Endothelial cell of umbilical vein (primary cell): ENCODE measurements at regions of chr14 and their contacts with region 1.

Region 1: DNA sequence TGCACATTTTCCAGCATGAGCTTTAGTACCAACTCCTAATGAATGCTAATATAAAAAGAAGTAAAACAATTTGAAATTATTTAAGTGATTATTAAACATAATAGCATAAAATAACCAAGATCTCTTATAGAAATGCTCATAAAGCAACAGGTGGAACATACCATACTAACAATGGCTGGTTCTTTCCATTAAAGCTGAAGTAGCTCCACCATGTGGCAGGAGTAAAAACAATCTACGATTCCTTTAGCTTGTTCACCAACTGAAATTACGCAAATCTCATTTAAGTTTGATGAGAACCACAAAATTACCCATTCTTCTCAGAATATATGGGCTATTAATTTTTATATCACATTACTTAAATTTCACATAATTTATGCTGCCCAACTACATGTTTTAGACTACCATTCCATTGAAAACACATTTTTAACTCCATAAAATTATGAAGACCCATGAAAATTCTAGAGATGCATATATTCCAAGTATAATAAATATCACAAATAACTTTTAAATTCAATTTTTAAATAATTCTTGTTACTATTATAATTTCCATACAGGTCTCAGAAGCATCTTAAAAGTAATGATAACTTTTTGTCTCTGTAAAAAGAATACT is 213.6 kb downstream of the DAD1 start:
- DNase-seq: peak; percentile 62
- H3K4me3 ChIP-seq: no peak overlapping the region
- H3K27ac ChIP-seq: no peak overlapping the region
- H3K4me1 ChIP-seq: no peaks in the 10 kb centered on the region
- H3K27me3 ChIP-seq: peaks cover 28 to 52% of the 10 kb centered on the region in 2 experiments
- CTCF ChIP-seq: peak; percentile 35 to 47
- POLR2A ChIP-seq: no peak

Region 2: DNA sequence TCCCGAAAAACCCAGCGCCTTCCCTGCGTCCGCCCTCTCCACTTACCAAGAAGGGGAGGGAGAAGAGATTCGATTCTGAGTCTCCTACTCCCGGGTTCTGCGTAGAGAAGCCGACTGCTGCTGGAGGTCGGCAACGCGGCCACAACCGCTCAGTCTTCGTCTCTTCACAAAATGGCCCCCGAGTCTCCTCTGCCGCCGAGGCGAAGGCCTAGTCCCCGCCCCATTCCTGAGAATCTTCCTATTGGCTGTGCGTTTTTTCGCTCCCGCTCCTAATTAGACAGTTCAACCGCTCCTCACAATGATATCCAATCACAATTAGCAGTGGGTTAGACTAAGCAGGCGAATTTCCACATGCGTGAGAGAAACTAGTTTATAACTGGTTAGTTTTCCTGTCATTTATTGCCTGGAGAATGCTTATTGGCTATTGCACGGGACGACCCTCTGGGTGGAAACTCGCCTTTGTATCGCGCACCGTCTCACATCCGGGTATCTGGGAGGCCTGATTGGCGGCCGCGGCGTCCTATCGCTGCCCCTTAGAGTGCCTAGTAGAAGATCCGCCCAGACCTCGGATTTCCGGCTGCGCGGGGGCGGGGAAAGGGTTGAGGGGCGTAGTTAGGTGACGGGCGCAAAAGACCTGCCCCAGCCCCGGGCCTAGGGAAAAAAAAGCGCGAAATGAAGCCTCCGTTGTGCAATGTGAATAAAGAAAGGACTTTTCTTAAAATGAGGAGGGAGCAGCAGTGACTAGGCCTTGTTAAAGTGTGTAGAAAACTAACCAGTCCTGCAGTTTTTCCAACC is 1106.0 kb before region 1 on chr14 and contains the start of gene HNRNPC:
- CTCF ChIA-PET with region 1: no interaction called
- POLR2A ChIA-PET with region 1: no interaction called
- dilution Hi-C with region 1: no loop called
- intact Hi-C with region 1: no loop called
- DNase-seq: peak; percentile 100
- H3K4me3 ChIP-seq: peak within 1 kb of the TSS; percentile 78 to 99 (median 96)
- H3K27ac ChIP-seq: peak within 1 kb of the TSS; percentile 97
- H3K4me1 ChIP-seq: peaks cover 28% of the 10 kb centered on the region
- H3K27me3 ChIP-seq: no peaks in the 10 kb centered on the region
- CTCF ChIP-seq: no peak
- POLR2A ChIP-seq: peak; percentile 89
- total RNA-seq, gene HNRNPC: 611 and 674 TPM in 2 replicates

Region 3: DNA sequence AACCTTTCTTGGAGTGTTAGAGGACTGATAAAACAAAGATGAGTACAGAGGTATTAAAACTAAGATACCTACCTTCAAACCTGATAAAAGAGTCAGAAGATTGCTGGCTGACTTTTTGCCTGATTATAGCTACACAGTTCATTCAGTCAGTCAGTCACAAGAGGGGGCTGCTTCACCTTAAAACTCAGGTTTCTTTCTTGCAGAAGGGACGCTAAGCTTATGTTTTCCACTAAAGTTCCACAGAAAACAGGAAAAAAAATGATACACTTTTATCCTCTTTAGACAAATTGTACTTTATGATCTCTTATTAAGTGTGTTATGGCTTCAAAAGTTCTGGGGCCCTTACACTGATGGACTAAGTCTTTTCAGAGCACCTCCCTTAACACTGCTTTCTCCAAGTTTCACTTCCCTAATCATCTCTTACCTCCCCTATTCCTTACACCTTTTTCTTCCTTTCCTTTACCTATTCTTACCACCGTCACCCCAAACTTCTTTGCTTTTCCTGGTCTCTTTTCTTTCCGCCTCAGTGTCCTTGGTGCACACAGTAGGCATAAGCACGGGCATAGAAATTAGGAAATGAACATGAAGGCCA is 253.1 kb before region 1 on chr14:
- CTCF ChIA-PET with region 1: interaction called, 13 read pairs
- POLR2A ChIA-PET with region 1: no interaction called
- dilution Hi-C with region 1: no loop called
- intact Hi-C with region 1: no loop called
- DNase-seq: no peak
- H3K4me3 ChIP-seq: no peak overlapping the region
- H3K27ac ChIP-seq: no peak overlapping the region
- H3K4me1 ChIP-seq: no peaks in the 10 kb centered on the region
- H3K27me3 ChIP-seq: peaks cover 6 to 43% of the 10 kb centered on the region in 2 experiments
- CTCF ChIP-seq: no peak
- POLR2A ChIP-seq: no peak

Region 4: DNA sequence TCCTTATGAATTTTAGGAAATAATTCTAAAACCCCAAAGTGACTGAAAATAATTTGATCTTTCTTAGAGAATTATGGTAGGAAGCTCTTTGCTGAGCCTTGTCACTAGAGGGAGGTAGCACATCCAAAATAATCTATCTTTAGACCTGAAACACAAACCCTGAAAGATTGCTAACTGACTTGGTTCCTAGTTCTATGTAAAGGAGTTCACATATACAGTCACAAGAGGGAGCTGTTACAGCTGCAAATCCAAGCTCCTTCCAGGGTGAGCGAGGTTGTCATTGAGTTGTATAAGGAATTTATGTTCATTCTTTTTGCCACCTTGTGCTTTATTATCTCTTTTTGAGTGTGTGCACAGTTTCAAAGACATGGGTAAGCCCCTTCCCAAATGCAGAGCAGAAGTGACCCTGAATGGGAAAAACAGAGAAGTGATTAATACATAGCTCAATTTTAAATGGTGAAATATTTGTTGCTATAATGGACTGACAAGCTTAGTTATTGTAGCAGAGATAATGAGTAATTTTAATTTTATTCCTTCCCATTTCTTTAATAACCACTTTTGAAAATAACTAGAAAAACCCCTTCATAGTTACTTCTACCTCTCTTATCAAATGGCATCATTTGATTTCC is 174.3 kb before region 1 on chr14:
- CTCF ChIA-PET with region 1: interaction called, 19 read pairs
- POLR2A ChIA-PET with region 1: no interaction called
- dilution Hi-C with region 1: no loop called
- intact Hi-C with region 1: no loop called
- DNase-seq: peak; percentile 49
- H3K4me3 ChIP-seq: no peak overlapping the region
- H3K27ac ChIP-seq: no peak overlapping the region
- H3K4me1 ChIP-seq: no peaks in the 10 kb centered on the region
- H3K27me3 ChIP-seq: peaks cover 7 to 11% of the 10 kb centered on the region in 2 experiments
- CTCF ChIP-seq: peak; percentile 56 to 66
- POLR2A ChIP-seq: no peak

Region 5: GRCh38 chr14:22303589-22304195 is 71.7 kb before region 1 on chr14:
- CTCF ChIA-PET with region 1: interaction called, 10 read pairs
- POLR2A ChIA-PET with region 1: no interaction called
- dilution Hi-C with region 1: no loop called
- intact Hi-C with region 1: no loop called
- DNase-seq: peak; percentile 13
- H3K4me3 ChIP-seq: no peak overlapping the region
- H3K27ac ChIP-seq: no peak overlapping the region
- H3K4me1 ChIP-seq: no peaks in the 10 kb centered on the region
- H3K27me3 ChIP-seq: peaks cover 28 to 31% of the 10 kb centered on the region in 2 experiments
- CTCF ChIP-seq: peak; percentile 8 to 29
- POLR2A ChIP-seq: no peak

Region 6: DNA sequence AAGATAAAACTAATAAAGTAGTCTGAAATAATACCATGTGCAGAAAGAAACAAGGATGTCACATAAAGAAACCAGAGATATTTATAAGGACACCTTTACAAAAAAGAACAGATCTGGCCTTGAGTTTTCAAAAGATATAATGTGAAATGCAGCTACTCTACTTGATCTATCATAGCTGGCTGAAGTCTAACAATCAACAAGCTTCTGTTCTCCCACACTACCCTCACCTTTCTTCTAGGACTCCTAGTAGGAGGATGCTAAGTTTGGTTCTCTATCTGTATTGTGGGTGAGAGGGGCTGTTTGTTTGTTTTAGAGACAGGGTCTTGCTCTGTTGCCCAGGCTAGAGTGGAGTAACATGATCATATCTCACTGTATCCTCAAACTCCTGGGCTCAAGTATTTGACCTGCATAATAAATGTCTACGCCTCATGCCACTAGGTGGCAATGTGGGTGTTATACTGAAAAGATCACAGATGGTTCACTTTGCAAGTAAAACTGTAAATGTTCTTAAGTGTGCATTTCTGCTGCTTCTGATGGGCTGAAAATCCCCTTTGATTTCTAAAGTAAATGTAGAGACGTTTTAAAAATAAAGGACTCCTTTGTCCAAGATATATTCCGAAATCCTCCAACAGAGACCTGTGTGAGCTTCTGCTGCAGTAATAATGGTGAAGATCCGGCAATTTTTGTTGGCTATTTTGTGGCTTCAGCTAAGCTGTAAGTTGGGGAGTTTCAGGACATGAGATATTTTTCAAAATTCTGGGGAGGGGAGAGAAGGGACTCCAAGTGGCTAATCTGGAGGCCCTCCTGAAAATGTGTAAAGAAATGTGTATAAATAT is 55.7 kb before region 1 on chr14:
- CTCF ChIA-PET with region 1: interaction called, 225 read pairs
- POLR2A ChIA-PET with region 1: no interaction called
- dilution Hi-C with region 1: no loop called
- intact Hi-C with region 1: loop called (anchors 1 kb)
- DNase-seq: peak; percentile 59
- H3K4me3 ChIP-seq: no peak overlapping the region
- H3K27ac ChIP-seq: no peak overlapping the region
- H3K4me1 ChIP-seq: no peaks in the 10 kb centered on the region
- H3K27me3 ChIP-seq: peaks cover 14 to 45% of the 10 kb centered on the region in 2 experiments
- CTCF ChIP-seq: peak; percentile 49 to 57
- POLR2A ChIP-seq: no peak

Region 7: GRCh38 chr14:22386924-22387775 is 11.7 kb after region 1 on chr14:
- CTCF ChIA-PET with region 1: interaction called, 11 read pairs
- POLR2A ChIA-PET with region 1: no interaction called
- dilution Hi-C with region 1: no loop called
- intact Hi-C with region 1: no loop called
- DNase-seq: peak; percentile 77
- H3K4me3 ChIP-seq: no peak overlapping the region
- H3K27ac ChIP-seq: no peak overlapping the region
- H3K4me1 ChIP-seq: peaks cover 6% of the 10 kb centered on the region
- H3K27me3 ChIP-seq: peaks cover 6 to 15% of the 10 kb centered on the region in 2 experiments
- CTCF ChIP-seq: peak; percentile 68 to 70
- POLR2A ChIP-seq: no peak

Region 8: GRCh38 chr14:23469127-23469905 is 1093.9 kb after region 1 on chr14 and contains the start of gene NGDN:
- CTCF ChIA-PET with region 1: no interaction called
- POLR2A ChIA-PET with region 1: no interaction called
- dilution Hi-C with region 1: no loop called
- intact Hi-C with region 1: no loop called
- DNase-seq: peak; percentile 100
- H3K4me3 ChIP-seq: peak within 1 kb of the TSS; percentile 73 to 91 (median 83)
- H3K27ac ChIP-seq: peak within 1 kb of the TSS; percentile 78
- H3K4me1 ChIP-seq: peaks cover 5% of the 10 kb centered on the region
- H3K27me3 ChIP-seq: no peaks in the 10 kb centered on the region
- CTCF ChIP-seq: peak; percentile 79 to 83
- POLR2A ChIP-seq: peak; percentile 52
- total RNA-seq, gene NGDN: 36.3 and 36.5 TPM in 2 replicates